A549 (cell line): ENCODE measurements at regions of chr11 and their contacts with region 1.

Region 1: GRCh38 chr11:57761301-57762234 is at the start of gene CTNND1:
- DNase-seq: peak; percentile 98 to 99
- ATAC-seq: peak; percentile 98 to 99
- H3K4me3 ChIP-seq: peak within 1 kb of the TSS; percentile 73
- H3K27ac ChIP-seq: peak within 1 kb of the TSS; percentile 91 to 97
- H3K4me1 ChIP-seq: peaks cover 22% of the 10 kb centered on the region
- CTCF ChIP-seq: no peak
- EP300 ChIP-seq: no peak
- POLR2A ChIP-seq: peak; percentile 36
- RAD21 ChIP-seq: peak in 1 of 2 experiments; percentile 28; a peak in 1 of 5 replicates
- polyA plus RNA-seq, gene CTNND1: 146 and 148 TPM in 2 replicates

Region 2: DNA sequence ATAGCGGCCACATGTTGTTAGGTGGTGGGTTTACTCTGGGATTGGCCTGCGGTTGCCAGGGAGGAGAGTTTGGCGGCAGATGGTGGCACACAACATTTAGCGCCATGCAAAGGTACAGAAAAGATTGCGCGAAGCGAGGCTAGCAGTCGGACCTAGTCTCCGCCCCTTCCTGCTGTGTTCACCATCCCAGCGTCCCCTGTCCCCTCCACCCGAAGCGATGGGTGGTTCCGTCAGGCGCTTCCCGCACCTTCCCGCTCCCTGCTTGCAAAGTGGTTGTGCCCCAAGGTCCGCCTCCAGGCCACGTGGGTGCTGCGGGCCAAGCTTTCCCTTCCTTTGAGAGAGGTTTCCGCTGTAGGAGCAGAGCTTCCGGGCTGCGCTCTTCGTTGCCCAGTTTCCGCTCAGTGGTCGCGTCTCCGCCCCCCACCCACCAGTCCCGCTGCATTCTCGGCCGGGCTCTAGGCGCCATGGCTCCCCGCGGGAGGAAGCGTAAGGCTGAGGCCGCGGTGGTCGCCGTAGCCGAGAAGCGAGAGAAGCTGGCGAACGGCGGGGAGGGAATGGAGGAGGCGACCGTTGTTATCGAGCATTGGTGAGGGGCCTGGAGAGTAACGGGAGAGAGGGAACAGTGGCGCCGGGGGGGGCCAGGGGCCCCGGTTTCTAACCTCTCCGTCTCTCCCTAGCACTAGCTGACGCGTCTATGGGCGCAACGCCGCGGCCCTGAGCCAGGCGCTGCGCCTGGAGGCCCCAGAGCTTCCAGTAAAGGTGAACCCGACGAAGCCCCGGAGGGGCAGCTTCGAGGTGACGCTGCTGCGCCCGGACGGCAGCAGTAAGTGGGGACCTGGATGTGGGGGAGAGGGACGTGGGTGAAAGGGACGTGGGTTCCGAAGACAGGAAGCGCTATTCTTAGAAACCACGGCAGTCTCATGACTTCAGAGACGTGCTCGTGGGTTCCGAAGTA is 20.2 kb before region 1 on chr11 and contains the start of gene SELENOH:
- CTCF ChIA-PET with region 1: interaction called, 3 read pairs
- POLR2A ChIA-PET with region 1: interaction called, 17 read pairs
- DNase-seq: peak; percentile 94 to 98
- ATAC-seq: peak; percentile 97 to 98
- H3K4me3 ChIP-seq: peak within 1 kb of the TSS; percentile 88
- H3K27ac ChIP-seq: peak within 1 kb of the TSS; percentile 90 to 95
- H3K4me1 ChIP-seq: peaks cover 14% of the 10 kb centered on the region
- CTCF ChIP-seq: no peak
- EP300 ChIP-seq: no peak
- POLR2A ChIP-seq: peak; percentile 53
- RAD21 ChIP-seq: peak in 1 of 2 experiments; percentile 18; a peak in 2 of 5 replicates
- polyA plus RNA-seq, gene SELENOH: 99.7 and 115 TPM in 2 replicates

Region 3: DNA sequence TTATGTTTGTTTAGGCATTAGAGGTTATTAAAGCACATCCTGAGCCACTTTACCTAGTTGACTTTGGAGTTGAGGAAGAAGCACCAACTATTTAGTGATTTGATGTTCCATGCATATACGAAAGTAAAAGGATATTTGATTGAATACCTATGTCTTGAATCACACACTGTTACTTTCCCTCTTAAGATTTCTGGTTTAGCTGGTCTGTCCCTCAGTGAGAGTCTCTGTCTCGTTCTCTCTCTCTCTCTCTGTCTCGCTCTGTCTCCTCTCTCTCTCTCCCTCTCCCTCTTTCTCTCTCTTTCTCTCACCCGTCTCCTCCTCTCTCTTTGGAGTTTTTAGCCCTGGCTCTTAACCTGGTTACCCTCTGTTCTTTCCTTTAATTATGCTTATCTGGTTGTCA is 11.0 kb after region 1 on chr11:
- CTCF ChIA-PET with region 1: interaction called, 11 read pairs
- POLR2A ChIA-PET with region 1: interaction called, 28 read pairs
- DNase-seq: no peak
- ATAC-seq: peak in 1 of 2 experiments; percentile 32; a peak in 2 of 6 replicates
- H3K4me3 ChIP-seq: no peak overlapping the region
- H3K27ac ChIP-seq: peak overlapping the region in 1 of 2 experiments; percentile 33; a peak in 3 of 6 replicates
- H3K4me1 ChIP-seq: peaks cover 61% of the 10 kb centered on the region
- CTCF ChIP-seq: no peak
- EP300 ChIP-seq: no peak
- POLR2A ChIP-seq: no peak
- RAD21 ChIP-seq: no peak

Region 4: DNA sequence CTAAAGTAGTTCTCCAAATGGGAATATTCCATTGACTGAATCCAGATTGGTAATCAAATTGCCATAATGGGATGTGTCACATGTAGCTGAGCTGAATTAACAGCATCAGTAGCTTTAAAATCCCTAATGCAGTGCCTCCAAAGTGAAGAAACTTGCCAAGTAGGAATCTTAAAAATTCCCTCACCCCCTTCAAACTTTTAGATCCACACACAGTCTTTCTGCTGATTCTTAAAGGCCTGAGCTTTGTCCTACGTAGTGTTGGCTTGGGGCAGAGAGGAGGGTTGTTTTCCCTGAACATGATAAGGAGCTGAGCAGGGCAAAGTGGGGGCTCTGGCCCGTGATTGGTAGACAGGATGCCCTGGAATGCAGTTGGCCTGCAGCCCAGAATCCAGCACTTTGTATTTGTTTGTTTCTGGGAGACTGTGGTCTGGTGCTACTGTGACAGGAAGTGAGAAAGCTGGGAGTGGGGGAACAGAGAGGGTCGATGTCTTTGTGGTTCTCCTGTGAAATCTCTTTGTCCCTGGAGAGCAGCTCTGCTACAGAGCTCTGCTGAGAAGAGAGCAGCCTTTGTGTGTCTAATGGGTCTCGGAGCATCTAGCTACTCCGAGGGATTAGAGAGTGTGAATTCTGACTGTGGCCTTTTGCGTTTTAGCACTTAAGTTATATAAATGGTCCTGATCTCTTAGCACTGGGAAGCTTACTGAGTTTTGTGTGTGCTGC is 16.9 kb after region 1 on chr11:
- CTCF ChIA-PET with region 1: interaction called, 11 read pairs
- POLR2A ChIA-PET with region 1: interaction called, 28 read pairs
- DNase-seq: peak; percentile 88 to 94
- ATAC-seq: peak; percentile 95 to 96
- H3K4me3 ChIP-seq: peak overlapping the region; percentile 31
- H3K27ac ChIP-seq: peak overlapping the region; percentile 83 to 88
- H3K4me1 ChIP-seq: peaks cover 92% of the 10 kb centered on the region
- CTCF ChIP-seq: no peak
- EP300 ChIP-seq: no peak
- POLR2A ChIP-seq: no peak
- RAD21 ChIP-seq: no peak; a peak in 1 of 5 replicates